Posterior vena cava (tissue), 2 donors: ENCODE measurements at regions of chr17 and their contacts with region 1.

Region 1: GRCh38 chr17:20114466-20114865 is 105.3 kb downstream of the SPECC1 start:
- DNase-seq: no peak

Region 2: DNA sequence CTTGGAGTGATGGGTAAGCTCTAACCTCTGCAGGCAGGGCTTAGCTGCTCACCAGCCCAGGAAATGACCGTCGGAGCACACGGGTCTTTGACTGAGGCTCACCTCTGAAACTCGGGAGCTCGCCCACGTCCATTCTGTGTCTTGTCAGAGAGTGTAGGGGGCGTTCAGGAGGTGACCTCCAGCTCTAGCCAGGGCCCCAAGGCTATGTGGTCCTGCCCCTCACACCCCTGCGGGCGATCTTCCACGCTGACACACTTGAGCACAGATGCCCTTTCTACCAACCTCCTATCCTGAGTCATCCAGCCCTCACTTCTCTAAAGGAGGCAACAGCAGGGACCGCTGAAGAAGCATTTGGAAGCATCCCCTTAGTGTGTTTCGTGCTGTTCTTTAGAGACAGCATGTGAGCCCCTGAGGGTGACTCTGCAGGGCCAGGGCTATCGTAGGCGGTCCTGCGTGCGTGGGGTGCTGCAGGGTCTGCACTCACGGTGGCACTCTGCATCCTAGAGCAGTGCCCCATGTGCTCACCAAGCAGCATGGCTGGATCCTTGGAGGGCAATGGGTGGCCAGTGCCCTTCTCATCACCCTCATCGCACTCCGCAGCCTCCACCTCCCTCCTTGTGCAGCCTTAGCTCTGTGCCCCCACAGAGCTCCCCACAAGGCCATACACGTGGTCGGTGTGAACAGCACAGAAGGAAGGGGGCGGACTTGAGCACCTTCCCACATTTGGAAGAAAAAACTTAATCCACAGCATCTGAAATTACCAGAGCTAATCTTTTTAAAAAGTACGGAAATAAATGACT is 547.0 kb before region 1 on chr17:
- intact Hi-C with region 1: no loop called
- DNase-seq: peak; percentile 55

Region 3: GRCh38 chr17:19992803-19993713 is 121.4 kb before region 1 on chr17:
- intact Hi-C with region 1: loop called in 1 of 2 experiments (anchors 5 kb)
- DNase-seq: peak; percentile 95

Region 4: DNA sequence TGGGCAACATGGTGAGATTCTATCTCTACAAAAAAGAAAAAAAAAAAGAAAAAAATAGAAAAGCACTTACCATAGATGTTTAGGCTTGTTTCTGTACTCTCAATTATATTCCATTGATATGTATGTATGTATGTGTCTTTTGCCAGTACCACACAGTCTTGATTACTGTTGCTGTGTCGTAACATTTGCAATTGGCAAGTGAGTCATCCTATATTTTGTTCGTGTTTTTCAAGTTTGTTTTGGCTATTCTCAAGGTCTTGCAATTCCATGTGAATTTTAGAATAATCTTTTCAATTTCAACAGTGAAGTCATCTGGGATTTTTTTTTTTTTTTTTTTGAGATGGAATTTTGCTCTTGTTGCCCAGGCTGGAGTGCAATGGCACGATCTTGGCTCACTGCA is 86.0 kb before region 1 on chr17:
- intact Hi-C with region 1: no loop called
- DNase-seq: no peak

Region 5: DNA sequence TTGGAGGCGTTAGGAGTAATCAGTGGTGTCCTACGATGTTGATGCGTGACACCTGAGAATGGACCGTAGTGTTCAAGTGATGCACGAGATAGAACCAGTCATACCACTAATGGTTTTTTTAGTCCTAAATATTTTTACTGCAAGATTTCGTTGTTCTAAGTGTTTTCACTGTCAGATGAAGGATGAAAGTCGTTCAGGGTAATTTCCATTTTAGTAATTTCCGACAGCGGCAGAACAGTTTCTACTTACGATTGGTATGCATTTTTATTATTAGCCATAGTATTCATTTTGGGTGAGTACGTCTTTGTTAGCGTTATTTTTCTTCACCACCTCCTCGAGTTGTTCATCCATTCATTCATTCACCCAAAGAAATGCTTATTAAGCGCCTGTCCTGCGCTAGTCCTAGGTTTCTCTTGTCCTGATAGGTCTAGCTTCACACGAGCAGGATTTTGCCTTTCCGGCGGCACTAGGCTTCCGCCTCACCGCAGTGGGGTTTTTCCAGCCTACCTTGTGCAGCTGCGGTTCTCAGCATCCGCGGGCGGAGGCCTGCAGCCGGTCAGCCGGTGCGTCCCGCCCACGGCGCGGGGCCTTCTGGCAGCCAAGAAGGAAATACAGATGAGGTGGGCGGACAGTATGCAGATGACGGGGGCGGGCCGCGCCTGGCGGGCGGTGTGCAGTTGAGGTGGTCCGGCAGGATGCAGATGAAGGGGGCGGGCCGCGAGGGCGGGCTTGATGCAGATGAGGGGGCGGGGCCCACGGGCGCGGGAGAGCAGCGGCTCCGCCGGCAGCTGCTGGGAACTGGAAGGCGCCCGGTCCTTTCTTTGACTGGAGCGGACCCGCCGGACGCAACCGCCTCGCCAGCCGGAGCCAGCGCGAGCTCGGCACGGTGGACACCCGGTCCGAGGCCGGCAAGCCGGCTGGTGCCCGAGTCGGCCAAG is 41.1 kb after region 1 on chr17:
- intact Hi-C with region 1: no loop called
- DNase-seq: peak; percentile 98